ENCODE measurements at regions of chr15 and their contacts with region 1.

Region 1: GRCh38 chr15:74036271-74037170 is 42.0 kb downstream of the PML start:
- DNase-seq: peak; percentile 22
- ATAC-seq: peak; percentile 91
- H3K4me3 ChIP-seq: no peak overlapping the region
- H3K27ac ChIP-seq: no peak overlapping the region
- H3K4me1 ChIP-seq: peaks cover 0 to 9% of the 10 kb centered on the region in 2 experiments; a peak in 1 of 4 replicates
- H3K27me3 ChIP-seq: no peaks in the 10 kb centered on the region
- CTCF ChIP-seq: peak; percentile 28 to 62 (median 54); a peak in 5 of 6 replicates
- POLR2A ChIP-seq: no peak
- RAD21 ChIP-seq: peak; percentile 56

Region 2: GRCh38 chr15:73964736-73965093 is 71.8 kb before region 1 on chr15:
- CTCF ChIA-PET with region 1: interaction called, 13 read pairs
- POLR2A ChIA-PET with region 1: no interaction called
- RAD21 ChIA-PET with region 1: no interaction called
- intact Hi-C with region 1: no loop called
- DNase-seq: peak; percentile 72
- ATAC-seq: peak; percentile 98
- H3K4me3 ChIP-seq: peak overlapping the region; percentile 30 to 43
- H3K27ac ChIP-seq: no peak overlapping the region; the same call in 1 of the 2 replicates
- H3K4me1 ChIP-seq: peaks cover 8 to 11% of the 10 kb centered on the region in 2 experiments; a peak in 3 of 4 replicates
- H3K27me3 ChIP-seq: no peaks in the 10 kb centered on the region
- CTCF ChIP-seq: peak; percentile 98 to 99 (median 99)
- POLR2A ChIP-seq: no peak
- RAD21 ChIP-seq: peak; percentile 81

Region 3: DNA sequence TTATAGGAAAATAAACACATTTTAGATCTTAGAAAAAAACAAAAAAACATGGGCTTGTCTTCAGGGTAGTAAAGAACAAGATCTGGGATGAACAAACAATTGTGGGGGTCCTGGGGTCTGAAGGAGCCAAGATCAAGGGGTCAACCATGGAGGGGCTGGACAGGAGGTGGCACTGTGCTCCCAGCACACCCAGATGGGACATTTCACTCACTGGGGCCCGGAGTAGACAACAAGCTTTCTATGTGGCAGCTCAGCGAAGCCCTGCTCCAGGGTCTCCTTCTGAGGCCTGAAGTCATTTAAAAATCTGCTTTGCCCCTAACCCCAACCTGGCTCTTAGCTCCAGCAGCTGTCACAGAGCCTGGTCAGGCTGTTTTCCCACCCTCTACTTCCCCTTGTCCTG is 11.3 kb after region 1 on chr15:
- CTCF ChIA-PET with region 1: interaction called, 52 read pairs
- POLR2A ChIA-PET with region 1: no interaction called
- RAD21 ChIA-PET with region 1: no interaction called
- intact Hi-C with region 1: no loop called
- DNase-seq: no peak
- ATAC-seq: no peak
- H3K4me3 ChIP-seq: no peak overlapping the region
- H3K27ac ChIP-seq: no peak overlapping the region
- H3K4me1 ChIP-seq: peaks cover 7 to 10% of the 10 kb centered on the region in 2 experiments
- H3K27me3 ChIP-seq: no peaks in the 10 kb centered on the region
- CTCF ChIP-seq: no peak
- POLR2A ChIP-seq: no peak
- RAD21 ChIP-seq: no peak